PC-3 (cell line): ENCODE measurements at regions of chr4 and their contacts with region 1.

Region 1: GRCh38 chr4:173990126-173990868 is 293.2 kb downstream of the FBXO8 start:
- DNase-seq: peak; percentile 29
- ATAC-seq: peak; percentile 49; the same call in 1 of the 2 replicates
- H3K4me3 ChIP-seq: no peak overlapping the region
- H3K27ac ChIP-seq: no peak overlapping the region
- H3K4me1 ChIP-seq: no peaks in the 10 kb centered on the region
- H3K27me3 ChIP-seq: peaks cover 64% of the 10 kb centered on the region
- CTCF ChIP-seq: peak; percentile 60

Region 2: GRCh38 chr4:173807347-173807746 is 182.9 kb before region 1 on chr4:
- CTCF ChIA-PET with region 1: no interaction called
- POLR2A ChIA-PET with region 1: interaction called, 11 read pairs
- intact Hi-C with region 1: no loop called
- DNase-seq: no peak
- ATAC-seq: no peak
- H3K4me3 ChIP-seq: no peak overlapping the region
- H3K27ac ChIP-seq: no peak overlapping the region
- H3K4me1 ChIP-seq: no peaks in the 10 kb centered on the region
- H3K27me3 ChIP-seq: no peaks in the 10 kb centered on the region; the same call in 1 of the 2 replicates
- CTCF ChIP-seq: no peak

Region 3: GRCh38 chr4:174080361-174080760 is 90.1 kb after region 1 on chr4:
- CTCF ChIA-PET with region 1: no interaction called
- POLR2A ChIA-PET with region 1: no interaction called
- intact Hi-C with region 1: no loop called
- DNase-seq: no peak
- ATAC-seq: no peak
- H3K4me3 ChIP-seq: no peak overlapping the region
- H3K27ac ChIP-seq: no peak overlapping the region
- H3K4me1 ChIP-seq: no peaks in the 10 kb centered on the region
- H3K27me3 ChIP-seq: peaks cover 24% of the 10 kb centered on the region
- CTCF ChIP-seq: no peak

Region 4: GRCh38 chr4:174973336-174973735 is 983.0 kb after region 1 on chr4:
- CTCF ChIA-PET with region 1: no interaction called
- POLR2A ChIA-PET with region 1: no interaction called
- intact Hi-C with region 1: no loop called
- DNase-seq: no peak
- ATAC-seq: no peak
- H3K4me3 ChIP-seq: no peak overlapping the region
- H3K27ac ChIP-seq: no peak overlapping the region
- H3K4me1 ChIP-seq: no peaks in the 10 kb centered on the region
- H3K27me3 ChIP-seq: no peaks in the 10 kb centered on the region
- CTCF ChIP-seq: no peak